Activated T-helper 2 cell treated with anti-CD3 and anti-CD28 coated beads, Interferon-gamma antibody, Interleukin-2, Interleukin-4, amounts not matched to agents 10 μg/mL and 5 μg/mL and 100 μg/mL, durations not matched to agents 14 hours and 24 hours and 36 hours (primary cell): ENCODE measurements at regions of chr1 and their contacts with region 1.

Region 1: DNA sequence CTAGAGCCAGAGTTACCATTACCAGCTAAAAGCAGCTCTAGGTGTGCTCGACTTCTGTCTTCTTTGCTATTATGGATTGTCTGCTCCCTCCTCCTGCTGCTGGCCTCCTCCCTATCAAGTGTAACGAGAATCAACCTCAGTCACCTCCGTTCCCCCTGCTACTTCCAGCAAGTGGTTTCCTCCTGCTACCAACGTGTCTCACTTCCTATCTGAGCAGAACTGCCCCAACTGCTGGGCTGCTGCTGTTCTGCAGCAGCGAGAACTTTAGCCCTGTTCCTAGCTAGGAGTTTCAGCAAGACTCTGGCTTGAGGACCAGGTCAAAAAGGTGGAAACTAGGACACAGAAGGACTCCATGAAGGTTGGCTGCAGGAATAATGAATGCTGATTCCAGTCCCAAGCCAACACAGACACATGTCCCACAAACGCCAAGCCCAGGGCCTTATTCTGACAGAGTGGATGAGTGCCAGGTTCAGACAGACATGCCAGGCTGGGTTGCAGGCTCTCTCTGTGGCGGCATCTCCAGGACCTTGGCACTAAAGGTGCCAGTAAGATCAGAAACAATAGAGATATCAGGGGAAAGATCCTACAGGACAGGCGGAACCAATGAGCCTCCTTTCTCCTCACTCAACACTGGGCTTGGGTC is 46.9 kb downstream of the CD34 start:
- DNase-seq: peak; percentile 45
- H3K4me3 Mint-ChIP-seq: peak overlapping the region; percentile 37
- H3K27ac Mint-ChIP-seq: peak overlapping the region; percentile 68
- H3K4me1 Mint-ChIP-seq: peaks cover 59% of the 10 kb centered on the region
- H3K27me3 Mint-ChIP-seq: no peaks in the 10 kb centered on the region

Region 2: GRCh38 chr1:207754974-207755689 is 108.9 kb before region 1 on chr1:
- intact Hi-C with region 1: no loop called
- DNase-seq: no peak
- H3K4me3 Mint-ChIP-seq: no peak overlapping the region
- H3K27ac Mint-ChIP-seq: no peak overlapping the region
- H3K4me1 Mint-ChIP-seq: peaks cover 59% of the 10 kb centered on the region
- H3K27me3 Mint-ChIP-seq: no peaks in the 10 kb centered on the region

Region 3: GRCh38 chr1:207848234-207848633 is 15.8 kb before region 1 on chr1:
- intact Hi-C with region 1: loop called (anchors 1 kb)
- DNase-seq: no peak
- H3K4me3 Mint-ChIP-seq: peak overlapping the region; percentile 5
- H3K27ac Mint-ChIP-seq: peak overlapping the region; percentile 65
- H3K4me1 Mint-ChIP-seq: peaks cover 50% of the 10 kb centered on the region
- H3K27me3 Mint-ChIP-seq: no peaks in the 10 kb centered on the region

Region 4: DNA sequence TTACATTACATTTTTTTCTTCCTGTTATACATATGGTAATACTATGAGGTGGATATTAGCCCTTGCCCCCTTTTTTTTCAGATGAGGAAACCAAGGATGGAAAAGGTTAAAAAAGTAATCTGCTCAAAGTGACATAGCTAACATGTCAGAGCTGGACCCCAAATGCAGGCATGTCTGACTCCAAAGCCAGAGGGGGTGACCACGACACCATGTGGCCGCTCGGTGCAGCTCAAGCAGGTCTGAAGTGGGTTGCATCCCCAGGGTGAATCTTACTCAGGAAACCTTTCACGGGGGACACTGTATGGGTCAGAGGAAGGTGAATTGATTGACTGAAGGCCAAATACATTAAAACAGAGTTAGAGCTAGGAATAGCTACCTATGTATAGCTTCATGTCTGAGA is 12.1 kb after region 1 on chr1:
- intact Hi-C with region 1: no loop called
- DNase-seq: no peak
- H3K4me3 Mint-ChIP-seq: no peak overlapping the region
- H3K27ac Mint-ChIP-seq: no peak overlapping the region
- H3K4me1 Mint-ChIP-seq: peaks cover 56% of the 10 kb centered on the region
- H3K27me3 Mint-ChIP-seq: no peaks in the 10 kb centered on the region